ENCODE measurements at regions of chr15 and their contacts with region 1.

Region 1: GRCh38 chr15:74635228-74635627 is 19.6 kb downstream of the CLK3 start:
- DNase-seq: no peak
- ATAC-seq: peak; percentile 86
- H3K4me3 ChIP-seq: no peak overlapping the region
- H3K27ac ChIP-seq: no peak overlapping the region
- H3K4me1 ChIP-seq: no peaks in the 10 kb centered on the region
- H3K27me3 ChIP-seq: no peaks in the 10 kb centered on the region
- CTCF ChIP-seq: peak; percentile 87 to 94 (median 88)
- POLR2A ChIP-seq: no peak
- RAD21 ChIP-seq: peak; percentile 96

Region 2: DNA sequence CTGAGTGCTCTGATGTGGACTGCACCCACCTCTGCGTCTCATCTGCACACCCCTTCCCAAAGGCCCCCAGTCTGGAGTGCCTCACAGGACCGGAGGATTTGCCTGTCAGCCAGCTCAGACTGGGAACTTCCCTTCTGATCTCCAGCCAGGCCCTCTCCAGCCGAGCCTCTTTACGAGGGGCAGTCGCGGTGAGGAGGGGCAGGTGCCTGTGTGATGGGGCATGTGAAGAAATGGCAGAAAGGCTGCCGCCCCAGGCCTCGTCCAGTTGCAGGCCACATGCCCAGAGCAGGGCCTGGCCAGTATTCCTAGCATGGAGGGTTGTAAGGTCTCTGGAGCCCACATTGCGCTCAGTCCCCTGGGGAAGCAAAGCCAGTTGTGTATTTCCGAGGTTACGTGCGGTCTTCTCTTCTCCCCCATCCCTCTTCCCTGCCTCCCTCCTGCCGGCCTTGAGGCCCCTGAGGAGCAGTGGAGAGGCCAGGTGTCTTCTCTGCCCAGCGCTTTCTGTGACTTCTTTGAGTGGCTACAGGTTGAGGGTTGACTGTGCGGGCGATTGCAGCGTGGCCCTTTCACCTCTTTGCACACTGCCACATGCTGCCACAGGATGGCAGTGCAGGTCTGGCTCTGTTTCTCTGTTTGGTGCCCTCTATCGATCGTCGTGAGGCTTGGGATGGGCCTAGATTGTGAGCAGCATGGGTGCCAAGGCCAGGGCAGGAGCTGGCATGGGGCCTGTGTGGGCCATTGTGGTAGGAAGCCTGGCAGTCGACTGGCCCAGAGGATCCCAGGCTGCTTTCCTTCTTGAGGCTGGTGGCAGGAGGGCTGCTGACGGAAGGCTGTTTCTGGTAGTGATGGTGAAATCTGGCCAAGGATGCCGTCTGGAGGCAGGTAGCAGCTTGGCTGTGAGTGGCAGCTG is 14.3 kb before region 1 on chr15:
- CTCF ChIA-PET with region 1: interaction called, 17 read pairs
- POLR2A ChIA-PET with region 1: no interaction called
- RAD21 ChIA-PET with region 1: interaction called in 1 of 2 experiments, 4 read pairs
- intact Hi-C with region 1: no loop called
- DNase-seq: peak; percentile 77
- ATAC-seq: peak; percentile 90
- H3K4me3 ChIP-seq: no peak overlapping the region
- H3K27ac ChIP-seq: no peak overlapping the region; the same call in 1 of the 2 replicates
- H3K4me1 ChIP-seq: peaks cover 5 to 22% of the 10 kb centered on the region in 2 experiments; a peak in 3 of 4 replicates
- H3K27me3 ChIP-seq: no peaks in the 10 kb centered on the region
- CTCF ChIP-seq: peak in 2 of 3 experiments; percentile 99; a peak in 4 of 6 replicates
- POLR2A ChIP-seq: no peak
- RAD21 ChIP-seq: no peak

Region 3: GRCh38 chr15:74854453-74855022 is 219.3 kb after region 1 on chr15:
- CTCF ChIA-PET with region 1: no interaction called
- POLR2A ChIA-PET with region 1: no interaction called
- RAD21 ChIA-PET with region 1: no interaction called
- intact Hi-C with region 1: no loop called
- DNase-seq: no peak
- ATAC-seq: no peak
- H3K4me3 ChIP-seq: no peak overlapping the region
- H3K27ac ChIP-seq: no peak overlapping the region
- H3K4me1 ChIP-seq: peaks cover 0 to 27% of the 10 kb centered on the region in 2 experiments; a peak in 2 of 4 replicates
- H3K27me3 ChIP-seq: no peaks in the 10 kb centered on the region
- CTCF ChIP-seq: no peak
- POLR2A ChIP-seq: no peak
- RAD21 ChIP-seq: no peak

Region 4: DNA sequence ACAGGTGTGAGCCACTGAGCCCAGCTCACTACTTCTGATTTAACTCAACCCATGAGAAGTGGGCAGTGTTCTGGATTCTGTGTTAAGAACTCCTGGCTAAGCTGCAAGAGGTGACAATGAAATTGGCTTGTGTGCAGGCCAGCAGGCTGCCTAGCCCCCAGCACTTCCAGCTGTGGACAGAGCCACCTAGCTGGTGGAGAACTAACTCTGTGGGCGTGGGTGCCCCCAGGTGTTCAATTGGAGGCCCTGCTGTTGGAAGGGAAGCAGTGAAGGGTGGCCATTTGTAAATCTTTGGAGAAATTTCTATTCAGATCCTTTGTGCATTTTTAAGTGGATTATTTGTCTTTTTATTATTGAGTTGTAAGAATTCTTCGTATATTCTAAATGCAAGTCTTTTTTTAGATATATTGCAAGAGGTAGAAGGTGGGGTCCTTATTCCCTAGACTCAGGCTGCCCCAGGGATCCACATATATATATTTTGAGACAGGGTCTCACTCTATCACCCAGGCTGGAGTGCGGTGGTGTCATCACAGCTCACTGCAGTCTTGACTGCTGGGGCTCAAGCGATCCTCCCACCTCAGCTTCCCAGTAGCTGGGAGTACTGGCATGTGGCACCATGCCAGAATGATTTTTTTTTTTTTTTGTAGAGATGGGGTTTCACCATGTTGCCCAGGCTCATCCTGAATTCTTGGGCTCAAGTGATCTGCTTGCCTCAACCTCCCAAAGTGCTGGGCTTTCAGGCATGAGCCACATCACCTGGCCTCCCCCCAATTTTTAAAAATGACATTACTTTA is 353.0 kb after region 1 on chr15:
- CTCF ChIA-PET with region 1: no interaction called
- POLR2A ChIA-PET with region 1: no interaction called
- RAD21 ChIA-PET with region 1: no interaction called
- intact Hi-C with region 1: loop called (anchors 5 kb)
- DNase-seq: peak; percentile 41
- ATAC-seq: peak; percentile 99
- H3K4me3 ChIP-seq: no peak overlapping the region
- H3K27ac ChIP-seq: no peak overlapping the region
- H3K4me1 ChIP-seq: peaks cover 10 to 11% of the 10 kb centered on the region in 2 experiments
- H3K27me3 ChIP-seq: 0 out of 2 replicates have a peak, but pooled peaks cover 4% of the 10 kb centered on the region
- CTCF ChIP-seq: peak; percentile 82 to 88 (median 85)
- POLR2A ChIP-seq: no peak
- RAD21 ChIP-seq: peak; percentile 89

Region 5: DNA sequence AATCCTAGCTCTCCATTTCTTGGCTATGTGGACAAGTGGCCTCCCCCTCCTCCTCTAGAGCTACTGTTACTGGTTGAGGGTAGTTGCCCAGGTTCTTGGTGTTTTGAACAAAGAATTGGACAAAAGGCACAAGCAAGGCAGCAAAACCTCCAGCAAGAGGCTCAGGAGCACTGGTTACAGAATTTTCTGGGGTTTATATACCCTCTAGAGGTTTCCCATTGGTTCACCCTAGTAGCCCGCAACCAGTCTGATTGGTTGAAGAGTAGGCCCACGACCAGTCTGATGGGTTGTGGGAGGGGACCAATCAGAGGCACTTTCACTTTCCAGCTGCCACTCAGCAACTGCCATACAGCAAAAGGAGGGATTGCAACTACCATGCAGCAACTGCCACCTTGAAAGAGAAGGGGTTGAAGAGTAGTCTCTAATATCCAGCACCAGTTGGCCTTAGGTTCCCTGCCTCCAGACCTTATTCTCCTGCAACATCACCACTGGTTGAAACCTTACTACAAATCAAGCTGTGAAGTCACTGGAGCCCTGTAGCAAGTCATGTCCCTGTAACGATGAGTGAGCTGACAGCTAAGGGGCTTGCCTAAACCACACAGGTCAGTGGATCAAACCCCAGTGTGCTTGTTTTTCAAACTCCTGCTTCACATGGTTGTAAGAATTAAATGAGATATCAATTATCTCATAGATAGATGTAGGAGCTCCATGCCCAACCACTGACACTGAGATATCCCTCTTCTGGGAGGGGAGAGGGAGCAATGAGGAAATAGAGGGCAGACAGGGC is 563.5 kb after region 1 on chr15:
- CTCF ChIA-PET with region 1: no interaction called
- POLR2A ChIA-PET with region 1: no interaction called
- RAD21 ChIA-PET with region 1: no interaction called
- intact Hi-C with region 1: no loop called
- DNase-seq: peak; percentile 54
- ATAC-seq: no peak
- H3K4me3 ChIP-seq: no peak overlapping the region
- H3K27ac ChIP-seq: no peak overlapping the region
- H3K4me1 ChIP-seq: peaks cover 21 to 42% of the 10 kb centered on the region in 2 experiments
- H3K27me3 ChIP-seq: no peaks in the 10 kb centered on the region
- CTCF ChIP-seq: no peak
- POLR2A ChIP-seq: peak; percentile 36
- RAD21 ChIP-seq: no peak

Region 6: DNA sequence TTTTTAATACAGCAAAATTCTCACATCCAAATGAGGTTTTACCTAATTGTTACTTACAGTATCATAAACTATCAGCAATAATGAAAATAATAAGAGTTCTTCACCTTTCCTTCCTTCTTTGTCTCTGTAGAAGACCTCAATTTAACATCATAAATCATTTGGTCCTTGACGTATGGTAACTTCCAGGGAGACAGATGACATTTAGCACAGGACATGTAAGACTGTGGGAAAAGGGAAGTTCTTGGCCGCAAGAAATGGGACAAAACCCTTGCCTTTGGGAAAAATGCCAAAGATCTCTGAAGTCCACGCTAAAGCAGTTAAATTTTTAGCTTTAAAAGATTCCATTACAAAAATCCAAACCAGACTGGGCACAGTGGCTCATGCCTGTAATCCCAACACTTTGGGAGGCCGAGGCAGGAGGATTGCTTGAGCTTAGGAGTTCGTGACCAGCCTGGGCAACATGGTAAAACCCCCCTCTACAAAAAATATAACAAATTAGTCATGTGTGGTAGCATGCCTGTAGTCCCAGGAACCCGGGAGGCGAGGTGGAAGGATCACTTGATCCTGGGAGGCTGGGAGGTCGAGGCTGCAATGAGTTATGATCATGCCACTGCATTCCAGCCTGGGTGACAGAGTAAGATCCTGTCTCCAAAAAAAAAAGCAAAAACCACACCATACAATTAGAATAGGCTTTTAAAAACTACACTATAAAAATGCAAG is 935.1 kb after region 1 on chr15:
- CTCF ChIA-PET with region 1: no interaction called
- POLR2A ChIA-PET with region 1: no interaction called
- RAD21 ChIA-PET with region 1: no interaction called
- intact Hi-C with region 1: no loop called
- DNase-seq: no peak
- ATAC-seq: no peak
- H3K4me3 ChIP-seq: no peak overlapping the region
- H3K27ac ChIP-seq: no peak overlapping the region
- H3K4me1 ChIP-seq: no peaks in the 10 kb centered on the region
- H3K27me3 ChIP-seq: no peaks in the 10 kb centered on the region
- CTCF ChIP-seq: no peak
- POLR2A ChIP-seq: no peak
- RAD21 ChIP-seq: no peak

Measured in HCT116 (cell line).